ENCODE measurements at regions of chr13 and their contacts with region 1.

Region 1: GRCh38 chr13:30509254-30510050 is 43.7 kb upstream of the HMGB1 start:
- DNase-seq: no peak
- ATAC-seq: no peak
- H3K4me3 ChIP-seq: no peak overlapping the region
- H3K27ac ChIP-seq: no peak overlapping the region
- H3K4me1 ChIP-seq: no peaks in the 10 kb centered on the region
- H3K27me3 ChIP-seq: no peaks in the 10 kb centered on the region
- CTCF ChIP-seq: no peak
- POLR2A ChIP-seq: no peak
- RAD21 ChIP-seq: no peak

Region 2: GRCh38 chr13:30690282-30691188 is 181.1 kb after region 1 on chr13:
- CTCF ChIA-PET with region 1: no interaction called
- POLR2A ChIA-PET with region 1: no interaction called
- RAD21 ChIA-PET with region 1: no interaction called
- intact Hi-C with region 1: loop called (anchors 5 kb)
- DNase-seq: no peak
- ATAC-seq: peak; percentile 81
- H3K4me3 ChIP-seq: peak overlapping the region; percentile 21 to 42
- H3K27ac ChIP-seq: no peak overlapping the region
- H3K4me1 ChIP-seq: peaks cover 0 to 12% of the 10 kb centered on the region in 2 experiments; a peak in 1 of 4 replicates
- H3K27me3 ChIP-seq: no peaks in the 10 kb centered on the region
- CTCF ChIP-seq: no peak
- POLR2A ChIP-seq: no peak
- RAD21 ChIP-seq: no peak

Region 3: DNA sequence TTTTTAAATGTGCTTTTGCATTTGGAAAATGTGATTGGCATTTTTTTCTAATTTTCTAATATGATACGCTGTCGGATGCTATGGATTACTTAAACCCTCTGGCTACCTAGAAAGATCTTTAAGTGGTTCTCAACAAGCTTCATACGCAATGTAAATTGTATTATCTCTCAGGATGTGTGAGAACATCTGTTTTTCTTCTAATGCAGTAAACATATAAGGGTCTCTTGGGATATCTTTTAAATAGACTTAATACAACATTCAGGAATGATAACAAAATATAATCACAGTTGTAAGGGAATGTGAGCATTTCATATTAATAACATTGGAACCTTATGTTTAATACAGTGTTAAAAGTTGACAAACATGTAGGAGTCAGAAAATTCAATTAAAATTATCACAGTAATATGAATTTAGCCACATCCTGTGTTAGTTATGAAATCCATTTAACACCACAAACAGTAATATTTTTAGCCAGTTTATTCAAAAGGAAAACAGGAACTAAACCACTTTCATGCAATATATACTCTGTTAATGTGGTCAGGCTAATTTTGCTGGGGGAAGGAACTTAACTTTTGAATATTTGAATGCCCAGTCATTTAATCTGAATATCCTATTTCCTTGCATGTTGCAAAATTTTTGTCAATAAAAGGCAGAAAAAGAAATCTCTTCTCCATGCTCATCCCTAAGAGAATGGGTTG is 210.9 kb after region 1 on chr13:
- CTCF ChIA-PET with region 1: no interaction called
- POLR2A ChIA-PET with region 1: no interaction called
- RAD21 ChIA-PET with region 1: no interaction called
- intact Hi-C with region 1: no loop called
- DNase-seq: no peak
- ATAC-seq: no peak
- H3K4me3 ChIP-seq: no peak overlapping the region
- H3K27ac ChIP-seq: no peak overlapping the region
- H3K4me1 ChIP-seq: peaks cover 0 to 13% of the 10 kb centered on the region in 2 experiments; a peak in 2 of 4 replicates
- H3K27me3 ChIP-seq: peaks cover 5% of the 10 kb centered on the region; the same call in 1 of the 2 replicates
- CTCF ChIP-seq: no peak
- POLR2A ChIP-seq: no peak
- RAD21 ChIP-seq: no peak

Measured in HCT116 (cell line).